ENCODE measurements at regions of chr6 and their contacts with region 1.

Region 1: GRCh38 chr6:43769526-43770416 is at the start of gene VEGFA:
- DNase-seq: peak; percentile 88 to 92
- H3K4me3 ChIP-seq: peak within 1 kb of the TSS; percentile 73 to 84
- H3K27ac ChIP-seq: peak within 1 kb of the TSS; percentile 94 to 97
- H3K4me1 ChIP-seq: peaks cover 0 to 42% (median 33%) of the 10 kb centered on the region in 4 donors
- H3K27me3 ChIP-seq: no peaks in the 10 kb centered on the region
- CTCF ChIP-seq: peak; percentile 94 to 99

Region 2: DNA sequence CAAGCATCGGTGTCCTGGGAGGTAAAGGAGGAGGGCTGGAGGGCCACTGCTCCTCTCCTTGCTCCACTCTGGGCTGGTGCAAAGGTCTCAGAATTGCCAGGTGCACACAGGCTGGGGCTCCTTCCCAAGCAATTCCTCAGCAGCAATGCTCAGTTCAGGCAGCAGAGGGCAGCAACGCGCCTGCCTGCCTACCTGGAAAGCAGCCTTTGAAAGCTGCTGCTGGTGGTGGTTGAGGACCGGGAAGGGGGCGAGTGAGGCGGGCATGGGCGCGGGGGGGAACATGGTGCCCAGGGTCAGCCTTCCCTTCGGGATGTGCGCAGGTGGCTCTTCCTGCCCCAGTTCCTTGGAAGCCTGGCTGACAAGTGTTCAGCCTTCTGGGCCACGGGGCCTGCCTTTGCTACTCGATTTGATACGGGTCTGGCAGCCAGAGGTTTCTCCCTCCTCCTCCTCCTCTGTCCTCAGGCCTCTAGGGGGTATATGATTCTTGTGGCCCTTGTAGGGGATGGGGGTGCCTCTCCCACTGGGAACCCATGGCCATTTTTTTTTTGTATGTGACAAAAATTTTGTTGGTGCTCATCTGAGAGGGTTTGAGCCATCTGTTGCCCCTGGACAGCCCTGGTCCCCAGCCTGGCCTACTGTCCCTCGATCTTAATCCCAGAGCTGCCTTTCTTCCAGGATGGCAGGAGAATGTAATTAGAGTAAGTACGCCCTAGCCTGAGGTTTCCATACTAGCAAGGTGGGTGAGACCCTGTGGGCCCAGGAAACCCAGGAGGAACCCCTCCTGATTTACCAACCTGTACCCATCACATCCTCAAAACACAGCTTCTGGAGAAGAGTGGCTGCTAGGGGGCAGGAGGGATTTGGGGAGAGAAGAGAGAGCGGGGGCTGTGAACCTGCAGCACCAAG is 102.3 kb before region 1 on chr6:
- intact Hi-C with region 1: loop called (anchors 5 kb)
- DNase-seq: peak; percentile 73 to 88
- H3K4me3 ChIP-seq: no peak overlapping the region
- H3K27ac ChIP-seq: peak overlapping the region; percentile 63 to 74
- H3K4me1 ChIP-seq: peaks cover 0 to 44% (median 33%) of the 10 kb centered on the region in 4 donors
- H3K27me3 ChIP-seq: peaks cover 0 to 6% of the 10 kb centered on the region in 2 donors
- CTCF ChIP-seq: peak; percentile 93 to 94

Region 3: GRCh38 chr6:43702534-43703440 is 67.0 kb before region 1 on chr6:
- intact Hi-C with region 1: loop called (anchors 10 kb)
- DNase-seq: peak; percentile 95 to 98
- H3K4me3 ChIP-seq: peak overlapping the region in 1 of 2 donors; percentile 2
- H3K27ac ChIP-seq: peak overlapping the region; percentile 79 to 82
- H3K4me1 ChIP-seq: peaks cover 0 to 37% (median 26%) of the 10 kb centered on the region in 4 donors
- H3K27me3 ChIP-seq: no peaks in the 10 kb centered on the region
- CTCF ChIP-seq: peak in 1 of 2 experiments; percentile 8

Region 4: GRCh38 chr6:44074439-44075136 is 304.8 kb after region 1 on chr6:
- intact Hi-C with region 1: loop called (anchors 1 kb)
- DNase-seq: peak; percentile 71 to 86
- H3K4me3 ChIP-seq: no peak overlapping the region
- H3K27ac ChIP-seq: peak overlapping the region; percentile 75 to 76
- H3K4me1 ChIP-seq: peaks cover 0 to 52% (median 36%) of the 10 kb centered on the region in 4 donors
- H3K27me3 ChIP-seq: peaks cover 0 to 8% of the 10 kb centered on the region in 2 donors
- CTCF ChIP-seq: peak; percentile 82 to 87